SK-N-SH (cell line): ENCODE measurements at regions of chr9 and their contacts with region 1.

Region 1: GRCh38 chr9:4604678-4605095 is 57.4 kb upstream of the PLPP6 start:
- DNase-seq: peak; percentile 68
- H3K4me3 ChIP-seq: no peak overlapping the region
- H3K27ac ChIP-seq: no peak overlapping the region
- H3K4me1 ChIP-seq: no peaks in the 10 kb centered on the region
- H3K27me3 ChIP-seq: no peaks in the 10 kb centered on the region
- CTCF ChIP-seq: peak; percentile 79
- EP300 ChIP-seq: no peak
- RAD21 ChIP-seq: peak; percentile 76

Region 2: GRCh38 chr9:4583001-4583400 is 21.7 kb before region 1 on chr9:
- CTCF ChIA-PET with region 1: interaction called, 20 read pairs
- POLR2A ChIA-PET with region 1: no interaction called
- DNase-seq: peak; percentile 12
- H3K4me3 ChIP-seq: no peak overlapping the region
- H3K27ac ChIP-seq: no peak overlapping the region
- H3K4me1 ChIP-seq: peaks cover 5 to 7% of the 10 kb centered on the region in 2 experiments; a peak in 2 of 4 replicates
- H3K27me3 ChIP-seq: no peaks in the 10 kb centered on the region
- CTCF ChIP-seq: no peak
- EP300 ChIP-seq: no peak
- RAD21 ChIP-seq: no peak

Region 3: GRCh38 chr9:4590430-4591122 is 14.1 kb before region 1 on chr9:
- CTCF ChIA-PET with region 1: interaction called, 20 read pairs
- POLR2A ChIA-PET with region 1: no interaction called
- DNase-seq: no peak
- H3K4me3 ChIP-seq: no peak overlapping the region
- H3K27ac ChIP-seq: no peak overlapping the region
- H3K4me1 ChIP-seq: no peaks in the 10 kb centered on the region
- H3K27me3 ChIP-seq: no peaks in the 10 kb centered on the region
- CTCF ChIP-seq: no peak
- EP300 ChIP-seq: no peak
- RAD21 ChIP-seq: no peak

Region 4: GRCh38 chr9:4640027-4640426 is 35.3 kb after region 1 on chr9:
- CTCF ChIA-PET with region 1: interaction called, 10 read pairs
- POLR2A ChIA-PET with region 1: no interaction called
- DNase-seq: peak; percentile 53
- H3K4me3 ChIP-seq: no peak overlapping the region
- H3K27ac ChIP-seq: no peak overlapping the region
- H3K4me1 ChIP-seq: no peaks in the 10 kb centered on the region; a peak in 1 of 4 replicates
- H3K27me3 ChIP-seq: no peaks in the 10 kb centered on the region; the same call in 1 of the 2 replicates
- CTCF ChIP-seq: peak; percentile 69
- EP300 ChIP-seq: no peak
- RAD21 ChIP-seq: peak; percentile 75